CD4-positive, alpha-beta T cell (primary cell): ENCODE measurements at regions of chrX and their contacts with region 1.

Region 1: GRCh38 chrX:79243691-79244090 is 99.2 kb downstream of the GPR174 start:
- DNase-seq: no peak
- ATAC-seq: no peak
- H3K4me3 ChIP-seq: no peak overlapping the region
- H3K4me3 Mint-ChIP-seq: no peak overlapping the region
- H3K27ac ChIP-seq: no peak overlapping the region
- H3K27ac Mint-ChIP-seq: no peak overlapping the region
- H3K4me1 ChIP-seq: no peaks in the 10 kb centered on the region
- H3K4me1 Mint-ChIP-seq: peaks cover 55% of the 10 kb centered on the region
- H3K27me3 ChIP-seq: no peaks in the 10 kb centered on the region
- H3K27me3 Mint-ChIP-seq: no peaks in the 10 kb centered on the region
- CTCF ChIP-seq: no peak

Region 2: DNA sequence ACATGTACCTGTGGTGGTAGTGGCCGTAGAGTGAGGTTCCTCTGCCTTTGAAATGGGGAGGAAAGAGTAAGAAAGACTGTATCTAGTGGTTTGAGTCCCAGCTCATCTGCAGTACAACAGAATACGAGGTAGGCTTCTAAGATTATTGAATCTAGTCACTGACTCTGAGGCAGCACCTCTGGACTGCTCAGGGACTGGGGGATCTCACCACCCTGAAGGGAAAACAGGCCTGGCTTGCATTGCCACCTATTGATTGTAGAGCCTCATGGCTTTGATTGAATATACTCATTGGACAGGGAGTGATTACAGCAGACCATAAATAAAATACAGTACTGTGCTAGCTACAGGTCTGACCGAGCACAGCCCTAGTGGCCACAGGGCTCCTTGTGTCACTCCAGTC is 48.7 kb before region 1 on chrX:
- CTCF ChIA-PET with region 1: no interaction called
- POLR2A ChIA-PET with region 1: no interaction called
- intact Hi-C with region 1: loop called in 1 of 2 experiments (anchors 10 kb)
- DNase-seq: no peak
- ATAC-seq: peak; percentile 14
- H3K4me3 ChIP-seq: no peak overlapping the region
- H3K4me3 Mint-ChIP-seq: no peak overlapping the region
- H3K27ac ChIP-seq: no peak overlapping the region
- H3K27ac Mint-ChIP-seq: no peak overlapping the region
- H3K4me1 ChIP-seq: no peaks in the 10 kb centered on the region
- H3K4me1 Mint-ChIP-seq: no peaks in the 10 kb centered on the region
- H3K27me3 ChIP-seq: no peaks in the 10 kb centered on the region
- H3K27me3 Mint-ChIP-seq: no peaks in the 10 kb centered on the region
- CTCF ChIP-seq: no peak